ENCODE measurements at regions of chr2 and their contacts with region 1.

Region 1: GRCh38 chr2:208112969-208113368 is 11.4 kb downstream of the CRYGD start:
- DNase-seq: no peak
- H3K4me3 ChIP-seq: peak overlapping the region in 1 of 7 experiments; percentile 54
- H3K27ac ChIP-seq: no peak overlapping the region
- H3K4me1 ChIP-seq: peaks cover 0 to 8% (median under 1%) of the 10 kb centered on the region in 4 experiments
- H3K27me3 ChIP-seq: no peaks in the 10 kb centered on the region

Region 2: DNA sequence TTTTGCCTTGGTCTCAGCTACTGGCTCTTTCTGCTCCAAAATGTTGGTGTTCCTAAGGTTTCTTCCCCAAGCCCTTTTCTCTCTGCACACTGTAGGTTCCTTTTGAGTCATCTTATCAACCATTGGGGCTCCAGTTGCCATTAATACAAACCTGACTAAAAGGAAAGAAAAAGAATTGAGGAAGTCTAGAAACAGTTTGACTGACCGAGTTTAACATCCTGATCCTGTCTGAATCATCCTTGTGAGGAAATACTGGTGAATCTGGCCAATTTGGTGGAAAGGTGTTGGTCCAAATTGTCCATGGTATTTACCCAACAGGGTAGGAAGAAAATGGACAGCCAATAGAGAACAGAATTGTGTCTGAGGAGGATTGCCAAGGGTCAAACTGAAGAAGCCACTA is 26.9 kb before region 1 on chr2:
- CTCF ChIA-PET with region 1: no interaction called
- POLR2A ChIA-PET with region 1: no interaction called
- DNase-seq: peak in 2 of 3 donors; percentile 37 to 39
- H3K4me3 ChIP-seq: no peak overlapping the region
- H3K27ac ChIP-seq: no peak overlapping the region
- H3K4me1 ChIP-seq: peaks cover 0 to 4% (median 2%) of the 10 kb centered on the region in 4 experiments
- H3K27me3 ChIP-seq: no peaks in the 10 kb centered on the region

Region 3: DNA sequence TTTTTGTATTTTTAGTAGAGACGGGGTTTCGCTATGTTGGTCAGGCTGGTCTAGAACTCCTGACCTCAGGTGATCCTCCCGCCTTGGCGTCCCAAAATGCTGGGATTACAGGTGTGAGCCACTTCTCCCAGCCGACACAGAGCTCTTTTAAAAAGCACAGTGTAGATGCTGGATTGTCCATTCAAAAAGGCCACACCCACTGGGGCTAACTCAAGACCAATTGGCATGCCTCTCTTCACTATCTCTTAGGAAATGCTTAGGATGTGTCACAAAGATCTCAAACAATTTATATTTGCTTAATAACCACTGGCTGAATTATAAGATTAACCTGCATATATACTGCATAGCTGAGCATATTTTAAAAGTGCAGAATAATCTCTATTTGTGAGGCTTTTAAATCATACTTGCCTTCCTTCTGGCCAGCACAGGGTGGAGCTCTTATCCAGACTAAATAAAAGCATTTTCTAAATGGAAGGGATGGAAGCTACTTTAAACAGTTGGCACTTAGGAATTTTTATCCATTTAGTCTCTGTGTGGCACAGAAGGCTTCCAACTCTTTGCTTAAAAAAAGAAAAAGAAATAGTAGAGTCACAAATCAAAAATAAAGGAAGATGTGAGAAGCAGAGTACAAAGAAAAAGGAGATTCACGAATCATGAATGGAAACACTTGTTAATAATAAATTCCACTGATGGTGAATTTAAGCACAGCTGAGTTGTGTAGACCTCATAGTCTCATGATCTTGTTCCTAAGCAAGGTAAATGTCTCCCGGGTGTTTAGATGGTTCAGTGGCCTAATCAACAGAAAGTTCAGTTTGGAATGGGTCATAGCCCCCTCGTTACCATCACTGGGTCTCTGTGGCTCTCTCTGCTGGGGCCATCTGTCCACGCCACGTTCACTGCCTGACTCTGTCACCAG is 11.0 kb before region 1 on chr2:
- CTCF ChIA-PET with region 1: interaction called, 13 read pairs
- POLR2A ChIA-PET with region 1: no interaction called
- DNase-seq: peak; percentile 46 to 50 (median 48)
- H3K4me3 ChIP-seq: peak overlapping the region in 5 of 7 experiments; percentile 9 to 67 (median 23)
- H3K27ac ChIP-seq: no peak overlapping the region
- H3K4me1 ChIP-seq: peaks cover 7 to 28% (median 15%) of the 10 kb centered on the region in 4 experiments
- H3K27me3 ChIP-seq: no peaks in the 10 kb centered on the region

Region 4: GRCh38 chr2:208130712-208131110 is 17.7 kb after region 1 on chr2:
- CTCF ChIA-PET with region 1: no interaction called
- POLR2A ChIA-PET with region 1: no interaction called
- DNase-seq: no peak
- H3K4me3 ChIP-seq: no peak overlapping the region
- H3K27ac ChIP-seq: no peak overlapping the region
- H3K4me1 ChIP-seq: peaks cover 6 to 17% (median 13%) of the 10 kb centered on the region in 4 experiments
- H3K27me3 ChIP-seq: no peaks in the 10 kb centered on the region